ENCODE measurements at regions of chr6 and their contacts with region 1.

Region 1: GRCh38 chr6:158649289-158650143 is at the start of gene SYTL3:
- DNase-seq: peak; percentile 93
- ATAC-seq: peak; percentile 62
- H3K4me3 Mint-ChIP-seq: peak within 1 kb of the TSS; percentile 81
- H3K27ac Mint-ChIP-seq: peak within 1 kb of the TSS; percentile 88
- H3K4me1 Mint-ChIP-seq: peaks cover 72% of the 10 kb centered on the region
- H3K27me3 Mint-ChIP-seq: no peaks in the 10 kb centered on the region
- total RNA-seq, gene SYTL3: 163 to 180 TPM

Region 2: DNA sequence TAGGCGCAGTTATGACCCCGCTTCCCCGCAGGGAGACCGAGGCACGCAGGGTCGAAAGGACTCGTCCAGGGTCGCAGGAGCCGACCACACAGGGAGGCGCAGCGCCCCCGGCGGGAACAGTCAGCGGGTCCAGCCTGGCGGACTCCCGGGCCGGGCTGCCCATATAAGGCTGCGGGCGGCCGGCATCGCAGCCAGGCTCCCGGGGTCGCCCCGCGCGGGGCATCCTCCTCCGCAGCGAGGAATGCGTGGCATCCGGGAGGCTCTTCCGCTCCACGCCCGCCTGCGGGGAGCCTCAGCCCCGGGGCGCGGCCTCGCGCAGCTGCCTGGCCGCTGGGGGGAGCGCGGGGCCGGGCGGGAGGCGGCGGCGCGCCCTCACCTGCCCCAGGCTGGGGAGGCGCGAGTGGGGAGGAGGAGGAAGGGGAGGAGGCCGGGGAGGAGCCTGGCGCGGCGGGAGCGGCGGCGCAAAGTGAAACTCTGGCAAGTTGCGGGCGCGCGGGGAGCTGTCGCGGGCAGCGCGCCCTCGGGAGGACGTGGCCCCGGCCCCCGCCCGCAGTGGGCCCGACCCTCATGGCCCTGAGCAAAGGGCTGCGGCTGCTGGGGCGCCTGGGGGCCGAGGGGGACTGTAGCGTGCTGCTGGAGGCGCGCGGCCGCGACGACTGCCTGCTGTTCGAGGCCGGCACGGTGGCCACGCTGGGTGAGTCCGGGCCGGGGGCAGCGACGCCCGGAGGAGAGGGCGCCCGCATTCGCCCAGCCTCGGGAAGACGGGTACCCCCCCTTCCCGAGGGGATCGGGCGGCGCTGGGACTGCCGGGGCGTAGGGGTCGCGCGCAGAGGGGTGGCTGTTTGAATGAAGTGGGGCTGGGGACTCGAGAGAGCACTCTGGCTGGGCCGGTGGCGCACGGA is 667.9 kb before region 1 on chr6 and contains the start of gene SYNJ2:
- CTCF ChIA-PET with region 1: no interaction called
- POLR2A ChIA-PET with region 1: no interaction called
- intact Hi-C with region 1: loop called in 1 of 2 experiments (anchors 5 kb)
- DNase-seq: peak; percentile 90
- ATAC-seq: peak; percentile 84
- H3K4me3 Mint-ChIP-seq: peak within 1 kb of the TSS; percentile 91
- H3K27ac Mint-ChIP-seq: peak within 1 kb of the TSS; percentile 93
- H3K4me1 Mint-ChIP-seq: peaks cover 42% of the 10 kb centered on the region
- H3K27me3 Mint-ChIP-seq: peaks cover 1% of the 10 kb centered on the region
- total RNA-seq, gene SYNJ2: 28.6 to 30.1 TPM

Region 3: DNA sequence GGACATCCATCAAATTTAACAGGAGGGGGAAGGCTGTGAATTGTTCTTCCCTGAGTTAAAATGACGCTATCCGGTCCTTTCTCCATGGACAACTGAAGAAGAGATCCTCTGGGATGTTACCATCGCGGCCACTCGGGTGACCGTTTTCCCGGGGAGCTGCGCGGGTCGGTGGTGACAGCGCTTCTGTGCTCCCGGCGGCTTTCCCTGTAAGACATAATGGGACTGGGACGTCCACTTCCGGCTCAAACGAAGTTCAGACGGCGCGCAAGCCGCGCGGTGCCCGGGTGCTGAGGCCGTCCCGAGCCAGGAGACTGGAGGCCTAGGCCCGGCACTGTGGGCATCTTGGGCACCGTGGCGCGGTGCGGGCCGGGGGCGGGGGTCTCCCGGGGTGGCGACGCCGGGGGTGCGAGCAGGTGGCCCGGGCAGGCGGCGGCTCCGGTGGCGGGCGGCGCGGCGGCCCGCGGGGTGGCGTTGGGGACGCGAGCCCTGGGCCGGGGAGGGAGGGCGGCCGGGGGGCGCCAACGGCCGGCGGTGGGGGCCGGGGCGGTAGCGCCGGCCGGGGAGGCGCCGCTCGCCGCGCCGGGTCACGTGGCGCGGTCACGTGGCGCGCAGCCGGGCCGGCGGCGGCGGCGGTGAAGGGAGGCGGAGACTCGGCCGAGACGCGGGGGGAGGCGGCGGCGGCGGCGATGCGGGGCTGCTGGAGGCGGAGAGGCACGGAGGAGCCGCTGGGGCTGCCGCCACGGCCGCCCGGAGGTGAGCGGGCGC is 417.8 kb before region 1 on chr6:
- CTCF ChIA-PET with region 1: no interaction called
- POLR2A ChIA-PET with region 1: no interaction called
- intact Hi-C with region 1: loop called in 1 of 2 experiments (anchors 5 kb)
- DNase-seq: peak; percentile 83
- ATAC-seq: peak; percentile 79
- H3K4me3 Mint-ChIP-seq: peak overlapping the region; percentile 86
- H3K27ac Mint-ChIP-seq: peak overlapping the region; percentile 88
- H3K4me1 Mint-ChIP-seq: peaks cover 30% of the 10 kb centered on the region
- H3K27me3 Mint-ChIP-seq: no peaks in the 10 kb centered on the region

Region 4: DNA sequence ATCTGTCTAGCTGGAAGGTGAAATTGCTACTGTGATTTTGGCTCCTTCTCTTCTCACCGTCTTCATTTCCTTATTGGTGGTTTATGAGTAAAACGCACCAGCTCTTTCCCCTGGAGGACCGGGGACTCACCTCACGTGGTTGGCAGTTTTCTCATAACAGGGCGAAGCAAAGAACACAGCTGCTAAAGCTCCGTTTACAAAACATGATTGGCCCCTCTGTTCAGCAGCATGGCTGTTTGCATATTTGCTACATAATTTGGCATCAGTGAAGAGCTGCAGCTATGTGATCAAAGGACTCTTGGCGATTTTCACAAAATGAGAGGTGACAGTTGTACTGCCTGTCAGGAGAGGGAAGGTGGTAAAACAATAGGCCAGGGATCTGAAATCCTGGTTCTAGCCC is 110.1 kb before region 1 on chr6:
- CTCF ChIA-PET with region 1: no interaction called
- POLR2A ChIA-PET with region 1: no interaction called
- intact Hi-C with region 1: no loop called
- DNase-seq: no peak
- ATAC-seq: no peak
- H3K4me3 Mint-ChIP-seq: no peak overlapping the region
- H3K27ac Mint-ChIP-seq: no peak overlapping the region
- H3K4me1 Mint-ChIP-seq: no peaks in the 10 kb centered on the region
- H3K27me3 Mint-ChIP-seq: peaks cover 37% of the 10 kb centered on the region

Region 5: GRCh38 chr6:158853072-158853871 is 203.8 kb after region 1 on chr6:
- CTCF ChIA-PET with region 1: no interaction called
- POLR2A ChIA-PET with region 1: interaction called, 5 read pairs
- intact Hi-C with region 1: loop called (anchors 1 to 5 kb)
- DNase-seq: peak; percentile 94
- ATAC-seq: peak; percentile 83
- H3K4me3 Mint-ChIP-seq: no peak overlapping the region
- H3K27ac Mint-ChIP-seq: no peak overlapping the region
- H3K4me1 Mint-ChIP-seq: peaks cover 29% of the 10 kb centered on the region
- H3K27me3 Mint-ChIP-seq: no peaks in the 10 kb centered on the region

Region 6: GRCh38 chr6:159017757-159018559 is 368.4 kb after region 1 on chr6:
- CTCF ChIA-PET with region 1: interaction called, 3 read pairs
- POLR2A ChIA-PET with region 1: interaction called, 8 read pairs
- intact Hi-C with region 1: loop called in 1 of 2 experiments (anchors 1 kb)
- DNase-seq: no peak
- ATAC-seq: peak; percentile 92
- H3K4me3 Mint-ChIP-seq: no peak overlapping the region
- H3K27ac Mint-ChIP-seq: peak overlapping the region; percentile 81
- H3K4me1 Mint-ChIP-seq: peaks cover 64% of the 10 kb centered on the region
- H3K27me3 Mint-ChIP-seq: no peaks in the 10 kb centered on the region

Region 7: GRCh38 chr6:159104163-159104925 is 454.8 kb after region 1 on chr6:
- CTCF ChIA-PET with region 1: interaction called, 3 read pairs
- POLR2A ChIA-PET with region 1: no interaction called
- intact Hi-C with region 1: loop called in 1 of 2 experiments (anchors 1 kb)
- DNase-seq: peak; percentile 89
- ATAC-seq: peak; percentile 72
- H3K4me3 Mint-ChIP-seq: peak overlapping the region; percentile 10
- H3K27ac Mint-ChIP-seq: peak overlapping the region; percentile 87
- H3K4me1 Mint-ChIP-seq: peaks cover 79% of the 10 kb centered on the region
- H3K27me3 Mint-ChIP-seq: no peaks in the 10 kb centered on the region

Region 8: GRCh38 chr6:159979136-159979874 is 1329.8 kb after region 1 on chr6:
- CTCF ChIA-PET with region 1: no interaction called
- POLR2A ChIA-PET with region 1: no interaction called
- intact Hi-C with region 1: loop called in 1 of 2 experiments (anchors 2 kb)
- DNase-seq: peak; percentile 82
- ATAC-seq: peak; percentile 83
- H3K4me3 Mint-ChIP-seq: peak overlapping the region; percentile 74
- H3K27ac Mint-ChIP-seq: peak overlapping the region; percentile 99
- H3K4me1 Mint-ChIP-seq: peaks cover 96% of the 10 kb centered on the region
- H3K27me3 Mint-ChIP-seq: no peaks in the 10 kb centered on the region

Measured in activated CD4-positive, alpha-beta T cell treated with anti-CD3 and anti-CD28 coated beads for 36 hours (primary cell).